Activated CD4-positive, alpha-beta memory T cell treated with anti-CD3 and anti-CD28 coated beads for 36 hours (primary cell): ENCODE measurements at regions of chr12 and their contacts with region 1.

Region 1: DNA sequence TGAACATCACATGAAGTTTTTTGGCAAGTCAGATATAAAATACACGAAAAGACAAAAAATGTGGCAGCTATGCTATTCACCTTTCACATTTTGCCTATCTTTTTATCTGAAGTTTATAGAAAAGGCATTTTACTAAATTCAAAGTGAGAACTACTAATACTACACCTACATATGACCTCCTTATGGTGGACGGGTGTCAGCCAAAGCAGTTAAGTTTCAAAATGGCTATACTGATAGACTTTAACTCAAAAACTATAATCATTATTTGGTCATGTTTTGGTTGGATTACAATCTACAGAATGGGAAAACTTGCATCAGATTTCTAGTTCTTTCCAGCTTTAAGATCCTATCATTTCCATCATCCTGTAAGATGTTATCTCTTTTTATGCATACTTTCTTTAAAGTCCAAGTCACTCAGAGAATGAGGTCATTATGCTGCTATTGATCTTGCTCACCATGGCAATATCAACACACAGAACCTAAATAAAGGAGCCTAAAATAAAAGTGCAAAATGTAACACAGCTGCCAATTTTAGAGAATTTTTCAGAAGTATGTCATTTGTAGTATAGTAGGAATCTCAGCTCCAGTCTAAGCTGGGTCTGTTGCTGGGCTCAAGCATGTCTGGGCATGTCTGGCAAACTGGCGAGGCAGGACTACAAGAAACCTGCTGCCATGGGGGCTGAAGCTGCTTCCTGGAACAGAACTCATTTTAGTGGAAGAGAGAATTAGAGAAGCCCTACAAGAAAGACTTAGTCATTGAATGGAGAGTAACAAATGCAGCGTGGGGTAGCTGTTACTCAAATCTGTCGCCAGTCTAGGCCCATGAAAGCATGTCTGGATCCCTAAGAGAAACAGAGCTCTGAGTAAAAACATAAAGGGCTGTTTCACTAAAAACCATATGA is 7.6 kb upstream of the AEBP2 start:
- DNase-seq: peak; percentile 78
- H3K4me3 Mint-ChIP-seq: no peak overlapping the region
- H3K27ac Mint-ChIP-seq: peak overlapping the region; percentile 99
- H3K4me1 Mint-ChIP-seq: peaks cover 33% of the 10 kb centered on the region
- H3K27me3 Mint-ChIP-seq: no peaks in the 10 kb centered on the region

Region 2: GRCh38 chr12:18868717-18869116 is 562.9 kb before region 1 on chr12:
- CTCF ChIA-PET with region 1: no interaction called
- POLR2A ChIA-PET with region 1: no interaction called
- intact Hi-C with region 1: loop called (anchors 5 kb)
- DNase-seq: no peak
- H3K4me3 Mint-ChIP-seq: no peak overlapping the region
- H3K27ac Mint-ChIP-seq: no peak overlapping the region
- H3K4me1 Mint-ChIP-seq: peaks cover 23% of the 10 kb centered on the region
- H3K27me3 Mint-ChIP-seq: peaks cover 1% of the 10 kb centered on the region

Region 3: DNA sequence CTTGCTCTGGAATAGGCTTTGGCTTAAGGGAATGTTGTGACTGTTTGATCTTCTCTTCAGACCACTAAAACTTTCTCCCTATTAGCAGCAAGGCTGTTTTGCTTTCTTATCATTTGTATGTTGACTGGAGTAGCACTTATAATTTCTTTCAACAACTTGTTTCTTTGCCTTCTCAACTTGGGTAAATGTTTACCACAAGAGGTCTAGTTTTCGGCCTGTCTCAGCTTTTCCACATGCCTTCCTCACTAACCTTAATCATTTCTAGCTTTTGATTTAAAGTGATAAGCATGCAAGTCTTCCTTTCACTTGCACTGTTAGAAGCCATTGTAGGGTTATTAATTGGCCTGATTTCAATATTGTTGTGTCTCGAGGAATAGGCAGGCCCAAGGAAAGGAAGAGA is 119.0 kb before region 1 on chr12:
- CTCF ChIA-PET with region 1: no interaction called
- POLR2A ChIA-PET with region 1: no interaction called
- intact Hi-C with region 1: loop called (anchors 5 kb)
- DNase-seq: peak; percentile 13
- H3K4me3 Mint-ChIP-seq: no peak overlapping the region
- H3K27ac Mint-ChIP-seq: no peak overlapping the region
- H3K4me1 Mint-ChIP-seq: peaks cover 10% of the 10 kb centered on the region
- H3K27me3 Mint-ChIP-seq: no peaks in the 10 kb centered on the region

Region 4: GRCh38 chr12:19412844-19413243 is 18.8 kb before region 1 on chr12:
- CTCF ChIA-PET with region 1: no interaction called
- POLR2A ChIA-PET with region 1: interaction called, 5 read pairs
- intact Hi-C with region 1: loop called (anchors 1 kb)
- DNase-seq: no peak
- H3K4me3 Mint-ChIP-seq: no peak overlapping the region
- H3K27ac Mint-ChIP-seq: no peak overlapping the region
- H3K4me1 Mint-ChIP-seq: peaks cover 2% of the 10 kb centered on the region
- H3K27me3 Mint-ChIP-seq: no peaks in the 10 kb centered on the region

Region 5: DNA sequence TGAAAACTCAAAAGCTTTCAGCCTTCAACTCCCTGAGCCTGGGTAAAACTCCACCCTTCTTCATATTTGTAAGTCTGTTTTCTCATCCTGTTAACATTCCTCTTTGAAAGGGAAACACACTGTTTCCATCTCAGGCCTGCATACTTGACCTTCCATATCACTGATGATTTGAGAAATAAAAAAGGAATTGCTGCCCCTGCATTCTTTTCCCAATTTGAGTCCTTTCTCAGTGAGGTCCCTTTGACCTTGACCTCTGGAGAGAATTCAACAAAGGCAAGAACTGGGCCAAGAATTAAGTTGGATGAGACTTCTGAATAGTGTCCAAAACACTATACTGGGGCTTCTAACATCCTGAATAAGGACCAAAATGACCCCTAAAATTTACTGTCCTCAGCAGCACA is 115.6 kb after region 1 on chr12:
- CTCF ChIA-PET with region 1: no interaction called
- POLR2A ChIA-PET with region 1: no interaction called
- intact Hi-C with region 1: loop called (anchors 1 kb)
- DNase-seq: no peak
- H3K4me3 Mint-ChIP-seq: no peak overlapping the region
- H3K27ac Mint-ChIP-seq: no peak overlapping the region
- H3K4me1 Mint-ChIP-seq: peaks cover 4% of the 10 kb centered on the region
- H3K27me3 Mint-ChIP-seq: no peaks in the 10 kb centered on the region

Region 6: DNA sequence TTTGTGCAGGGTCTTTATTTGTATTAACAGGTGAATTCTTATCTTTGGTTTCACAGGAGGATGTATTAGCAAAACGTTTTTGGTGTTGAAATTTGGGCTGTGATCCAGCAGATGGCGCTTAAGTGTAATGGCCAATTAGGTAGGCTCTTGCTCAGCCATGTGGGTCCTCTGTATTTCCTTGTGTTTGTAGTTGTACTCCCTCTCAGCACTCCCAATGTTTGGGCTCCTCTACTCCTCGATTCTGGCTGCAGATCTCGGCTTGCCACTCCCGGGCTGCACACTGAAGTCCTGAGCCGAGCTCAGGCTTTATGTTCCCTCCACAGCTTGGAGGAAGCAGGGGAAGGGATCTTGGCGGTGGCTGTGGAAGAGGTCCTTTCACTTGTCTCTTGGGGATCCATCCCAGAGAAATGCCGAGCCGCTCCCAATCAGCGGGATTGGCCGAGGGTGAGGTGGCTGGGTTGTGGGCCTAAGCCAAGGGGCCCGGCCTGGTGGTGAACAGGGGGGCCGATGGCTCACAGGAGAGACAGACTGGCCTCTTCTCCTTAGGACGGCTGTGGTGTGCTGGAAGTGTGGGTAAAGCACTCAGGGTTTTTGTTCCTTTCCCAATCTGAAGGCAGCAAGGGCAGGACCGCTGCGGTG is 141.4 kb after region 1 on chr12:
- CTCF ChIA-PET with region 1: no interaction called
- POLR2A ChIA-PET with region 1: no interaction called
- intact Hi-C with region 1: no loop called
- DNase-seq: peak; percentile 45
- H3K4me3 Mint-ChIP-seq: no peak overlapping the region
- H3K27ac Mint-ChIP-seq: no peak overlapping the region
- H3K4me1 Mint-ChIP-seq: no peaks in the 10 kb centered on the region
- H3K27me3 Mint-ChIP-seq: no peaks in the 10 kb centered on the region

Region 7: GRCh38 chr12:19833775-19834501 is 402.3 kb after region 1 on chr12:
- CTCF ChIA-PET with region 1: no interaction called
- POLR2A ChIA-PET with region 1: no interaction called
- intact Hi-C with region 1: loop called (anchors 5 kb)
- DNase-seq: peak; percentile 61
- H3K4me3 Mint-ChIP-seq: no peak overlapping the region
- H3K27ac Mint-ChIP-seq: peak overlapping the region; percentile 73
- H3K4me1 Mint-ChIP-seq: peaks cover 27% of the 10 kb centered on the region
- H3K27me3 Mint-ChIP-seq: no peaks in the 10 kb centered on the region